Naive thymus-derived CD4-positive, alpha-beta T cell (primary cell): ENCODE measurements at regions of chr14 and their contacts with region 1.

Region 1: GRCh38 chr14:56117765-56118610 is at the start of gene PELI2:
- DNase-seq: peak; percentile 77 to 91 (median 88)
- ATAC-seq: peak; percentile 90
- H3K4me3 ChIP-seq: peak within 1 kb of the TSS; percentile 83
- H3K4me3 Mint-ChIP-seq: peak within 1 kb of the TSS; percentile 84 to 97 (median 94)
- H3K27ac ChIP-seq: peak within 1 kb of the TSS; percentile 83
- H3K27ac Mint-ChIP-seq: peak within 1 kb of the TSS; percentile 82 to 99 (median 98)
- H3K4me1 ChIP-seq: peaks cover 14 to 32% of the 10 kb centered on the region in 2 donors
- H3K4me1 Mint-ChIP-seq: peaks cover 29 to 64% (median 57%) of the 10 kb centered on the region in 7 donors
- H3K27me3 ChIP-seq: peaks cover 0 to 4% of the 10 kb centered on the region in 2 donors
- H3K27me3 Mint-ChIP-seq: peaks cover 0 to 59% (median 0%) of the 10 kb centered on the region in 5 donors
- total RNA-seq, gene PELI2: 6.2 to 24.7 (median 11.5) TPM

Region 2: GRCh38 chr14:54881235-54881760 is 1236.7 kb before region 1 on chr14:
- CTCF ChIA-PET with region 1: no interaction called
- POLR2A ChIA-PET with region 1: no interaction called
- intact Hi-C with region 1: loop called in 1 of 2 experiments (anchors 5 kb)
- DNase-seq: peak in 7 of 9 donors; percentile 55 to 74 (median 72)
- ATAC-seq: peak; percentile 77
- H3K4me3 ChIP-seq: peak overlapping the region; percentile 70
- H3K4me3 Mint-ChIP-seq: peak overlapping the region; percentile 85 to 97 (median 90)
- H3K27ac ChIP-seq: peak overlapping the region; percentile 79
- H3K27ac Mint-ChIP-seq: peak overlapping the region; percentile 90 to 99 (median 96)
- H3K4me1 ChIP-seq: peaks cover 7 to 17% of the 10 kb centered on the region in 2 donors
- H3K4me1 Mint-ChIP-seq: peaks cover 28 to 66% (median 60%) of the 10 kb centered on the region in 7 donors
- H3K27me3 ChIP-seq: no peaks in the 10 kb centered on the region
- H3K27me3 Mint-ChIP-seq: no peaks in the 10 kb centered on the region

Region 3: DNA sequence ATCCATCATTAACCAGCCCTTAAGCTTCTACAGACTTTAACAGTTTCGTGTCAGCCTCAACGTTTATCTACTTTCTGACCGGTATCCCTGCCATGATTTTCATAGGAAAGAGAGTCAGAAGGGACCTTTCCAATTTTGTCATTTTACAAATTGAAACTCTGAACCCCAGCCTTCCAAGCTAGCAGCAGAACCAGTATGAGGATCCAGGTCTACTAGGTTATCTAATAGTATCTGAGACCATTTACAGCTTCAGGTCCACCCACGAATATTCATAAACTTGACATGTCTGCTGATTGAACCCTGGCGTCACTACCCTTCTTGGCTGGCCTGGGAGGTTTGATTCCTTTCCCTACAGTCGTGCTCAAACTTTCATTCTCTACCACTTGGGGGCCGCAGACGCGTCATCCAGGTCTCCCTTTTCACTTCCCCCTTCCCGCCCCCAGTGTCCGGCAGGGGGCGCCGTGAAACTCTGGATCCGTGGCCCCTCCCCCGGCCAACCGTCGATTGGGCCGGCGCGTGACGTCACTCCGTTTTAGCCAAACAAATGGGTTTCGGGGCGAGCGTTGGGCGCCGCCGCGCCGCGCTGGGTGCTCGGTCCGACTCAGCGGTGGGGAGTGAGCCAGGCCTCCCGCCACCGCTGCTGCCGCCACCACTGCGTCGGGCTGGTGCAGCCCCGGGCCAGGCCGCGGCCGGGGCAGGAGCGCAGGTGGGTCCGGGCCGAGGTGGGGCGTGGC is 847.0 kb before region 1 on chr14 and contains the start of gene FBXO34:
- CTCF ChIA-PET with region 1: no interaction called
- POLR2A ChIA-PET with region 1: interaction called, 8 read pairs
- intact Hi-C with region 1: loop called in 1 of 2 experiments (anchors 2 kb)
- DNase-seq: peak; percentile 96 to 100 (median 99)
- ATAC-seq: peak; percentile 96
- H3K4me3 ChIP-seq: peak within 1 kb of the TSS; percentile 64
- H3K4me3 Mint-ChIP-seq: peak within 1 kb of the TSS; percentile 85 to 94 (median 92)
- H3K27ac ChIP-seq: peak within 1 kb of the TSS; percentile 88
- H3K27ac Mint-ChIP-seq: peak within 1 kb of the TSS; percentile 85 to 96 (median 94)
- H3K4me1 ChIP-seq: peaks cover 4 to 19% of the 10 kb centered on the region in 2 donors
- H3K4me1 Mint-ChIP-seq: peaks cover 19 to 48% (median 40%) of the 10 kb centered on the region in 7 donors
- H3K27me3 ChIP-seq: no peaks in the 10 kb centered on the region
- H3K27me3 Mint-ChIP-seq: peaks cover 0 to 3% (median 0%) of the 10 kb centered on the region in 5 donors
- total RNA-seq, gene FBXO34: 22.0 to 27.3 (median 25.8) TPM

Region 4: GRCh38 chr14:55731881-55732498 is 386.0 kb before region 1 on chr14:
- CTCF ChIA-PET with region 1: no interaction called
- POLR2A ChIA-PET with region 1: no interaction called
- intact Hi-C with region 1: loop called in 1 of 2 experiments (anchors 10 kb)
- DNase-seq: peak; percentile 8 to 58 (median 33)
- ATAC-seq: peak; percentile 44
- H3K4me3 ChIP-seq: no peak overlapping the region
- H3K4me3 Mint-ChIP-seq: no peak overlapping the region
- H3K27ac ChIP-seq: no peak overlapping the region
- H3K27ac Mint-ChIP-seq: no peak overlapping the region
- H3K4me1 ChIP-seq: no peaks in the 10 kb centered on the region
- H3K4me1 Mint-ChIP-seq: peaks cover 0 to 19% (median 0%) of the 10 kb centered on the region in 7 donors
- H3K27me3 ChIP-seq: no peaks in the 10 kb centered on the region
- H3K27me3 Mint-ChIP-seq: peaks cover 0 to 16% (median 4%) of the 10 kb centered on the region in 5 donors

Region 5: DNA sequence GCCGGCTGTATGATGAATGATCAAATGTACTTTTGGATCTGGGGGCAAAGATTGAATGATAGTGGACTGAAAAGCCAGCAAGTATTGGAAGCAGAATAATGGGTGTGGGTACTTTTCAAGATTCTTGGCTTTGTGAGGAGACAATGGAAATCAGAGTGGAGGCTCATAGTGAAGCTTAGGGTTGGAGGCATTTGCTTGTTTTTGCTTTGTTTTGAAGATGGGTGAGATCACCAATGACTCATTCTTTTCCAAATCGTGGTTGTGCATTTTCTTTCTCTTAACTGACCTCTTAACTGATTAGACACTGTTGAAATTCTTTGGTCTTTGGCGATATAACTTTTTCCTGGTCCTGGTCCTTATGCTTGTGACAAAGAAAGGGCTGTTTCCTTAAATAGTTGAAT is 54.6 kb after region 1 on chr14:
- CTCF ChIA-PET with region 1: no interaction called
- POLR2A ChIA-PET with region 1: interaction called, 3 read pairs
- intact Hi-C with region 1: loop called in 1 of 2 experiments (anchors 2 kb)
- DNase-seq: no peak
- ATAC-seq: no peak
- H3K4me3 ChIP-seq: no peak overlapping the region
- H3K4me3 Mint-ChIP-seq: peak overlapping the region; percentile 15 to 75 (median 42)
- H3K27ac ChIP-seq: no peak overlapping the region
- H3K27ac Mint-ChIP-seq: peak overlapping the region; percentile 2 to 91 (median 54)
- H3K4me1 ChIP-seq: peaks cover 3 to 26% of the 10 kb centered on the region in 2 donors
- H3K4me1 Mint-ChIP-seq: peaks cover 32 to 70% (median 63%) of the 10 kb centered on the region in 7 donors
- H3K27me3 ChIP-seq: no peaks in the 10 kb centered on the region
- H3K27me3 Mint-ChIP-seq: no peaks in the 10 kb centered on the region

Region 6: DNA sequence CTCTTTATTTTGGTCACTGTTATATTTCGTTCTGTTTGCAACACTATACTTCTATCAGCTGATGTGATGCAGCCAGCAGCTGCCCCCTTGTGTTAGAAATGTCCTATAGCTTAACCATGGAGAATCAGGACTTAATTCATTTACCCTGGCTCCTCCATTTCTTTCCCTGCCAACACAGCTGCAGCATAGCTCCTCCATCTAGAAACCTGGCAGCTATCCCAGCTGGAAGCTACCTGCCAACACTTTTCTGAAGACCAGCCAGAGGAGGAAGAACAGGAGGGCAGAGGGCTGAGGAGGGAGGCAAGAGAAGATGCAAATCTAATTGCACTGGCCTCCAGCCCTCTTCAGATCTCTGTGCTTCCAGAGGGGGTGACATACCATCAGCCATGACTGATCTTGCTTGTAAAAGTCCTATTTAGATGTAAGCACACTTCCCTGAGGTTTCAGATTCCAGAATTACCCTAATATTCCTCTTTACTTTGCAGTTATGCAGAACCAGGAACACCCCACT is 304.8 kb after region 1 on chr14:
- CTCF ChIA-PET with region 1: no interaction called
- POLR2A ChIA-PET with region 1: no interaction called
- intact Hi-C with region 1: no loop called
- DNase-seq: peak in 6 of 9 donors; percentile 13 to 39 (median 18)
- ATAC-seq: peak; percentile 38
- H3K4me3 ChIP-seq: no peak overlapping the region
- H3K4me3 Mint-ChIP-seq: no peak overlapping the region
- H3K27ac ChIP-seq: no peak overlapping the region
- H3K27ac Mint-ChIP-seq: no peak overlapping the region
- H3K4me1 ChIP-seq: no peaks in the 10 kb centered on the region
- H3K4me1 Mint-ChIP-seq: peaks cover 0 to 4% (median 0%) of the 10 kb centered on the region in 7 donors
- H3K27me3 ChIP-seq: no peaks in the 10 kb centered on the region
- H3K27me3 Mint-ChIP-seq: peaks cover 0 to 24% (median 4%) of the 10 kb centered on the region in 5 donors

Region 7: GRCh38 chr14:56730538-56731145 is 612.7 kb after region 1 on chr14:
- CTCF ChIA-PET with region 1: no interaction called
- POLR2A ChIA-PET with region 1: no interaction called
- intact Hi-C with region 1: no loop called
- DNase-seq: no peak
- ATAC-seq: no peak
- H3K4me3 ChIP-seq: no peak overlapping the region
- H3K4me3 Mint-ChIP-seq: no peak overlapping the region
- H3K27ac ChIP-seq: no peak overlapping the region
- H3K27ac Mint-ChIP-seq: no peak overlapping the region
- H3K4me1 ChIP-seq: no peaks in the 10 kb centered on the region
- H3K4me1 Mint-ChIP-seq: no peaks in the 10 kb centered on the region
- H3K27me3 ChIP-seq: no peaks in the 10 kb centered on the region
- H3K27me3 Mint-ChIP-seq: peaks cover 21 to 60% (median 36%) of the 10 kb centered on the region in 5 donors

Region 8: GRCh38 chr14:57390028-57390805 is 1272.2 kb after region 1 on chr14 and contains the start of gene NAA30:
- CTCF ChIA-PET with region 1: no interaction called
- POLR2A ChIA-PET with region 1: no interaction called
- intact Hi-C with region 1: loop called (anchors 1 to 2 kb)
- DNase-seq: peak; percentile 80 to 97 (median 92)
- ATAC-seq: peak; percentile 98
- H3K4me3 ChIP-seq: peak within 1 kb of the TSS; percentile 68
- H3K4me3 Mint-ChIP-seq: peak within 1 kb of the TSS; percentile 86 to 98 (median 94)
- H3K27ac ChIP-seq: peak within 1 kb of the TSS; percentile 72
- H3K27ac Mint-ChIP-seq: peak within 1 kb of the TSS; percentile 88 to 99 (median 95)
- H3K4me1 ChIP-seq: peaks cover 11 to 13% of the 10 kb centered on the region in 2 donors
- H3K4me1 Mint-ChIP-seq: peaks cover 31 to 58% (median 40%) of the 10 kb centered on the region in 7 donors
- H3K27me3 ChIP-seq: no peaks in the 10 kb centered on the region
- H3K27me3 Mint-ChIP-seq: peaks cover 0 to under 1% (median 0%) of the 10 kb centered on the region in 5 donors
- total RNA-seq, gene NAA30: 14.6 to 19.6 (median 16.2) TPM